ENCODE measurements at regions of chr10 and their contacts with region 1.

Region 1: DNA sequence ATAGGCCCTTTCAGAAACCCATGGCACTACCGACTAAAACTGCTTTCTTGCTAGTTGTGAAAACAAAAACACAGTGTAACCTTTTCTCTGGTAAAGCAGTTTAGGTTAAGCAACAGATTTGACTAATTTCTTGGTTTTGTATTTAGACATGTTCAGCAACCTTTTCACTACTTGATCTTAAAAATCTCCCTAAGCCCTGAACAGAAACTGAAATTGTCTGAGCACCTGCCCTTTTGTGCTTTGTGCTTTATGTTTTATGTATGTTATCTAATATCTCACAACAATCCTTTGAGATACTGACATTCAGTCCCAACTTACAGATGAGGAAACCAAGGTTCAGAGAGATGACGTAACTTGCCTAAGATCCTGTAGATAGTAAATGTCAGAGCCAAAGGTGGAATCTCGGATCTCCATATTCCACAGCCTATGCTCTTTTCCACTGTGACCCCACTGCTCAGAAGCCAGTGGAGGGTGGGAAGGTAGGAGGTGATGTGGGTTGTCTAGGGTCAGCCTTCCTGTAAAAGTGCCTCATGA is 146.6 kb downstream of the LCOR start:
- DNase-seq: peak; percentile 56
- ATAC-seq: peak; percentile 88
- H3K4me3 ChIP-seq: peak overlapping the region; percentile 13; the same call in 1 of the 2 replicates
- H3K27ac ChIP-seq: peak overlapping the region; percentile 87
- H3K4me1 ChIP-seq: peaks cover 35% of the 10 kb centered on the region
- H3K27me3 ChIP-seq: no peaks in the 10 kb centered on the region
- CTCF ChIP-seq: no peak
- EP300 ChIP-seq: peak in 1 of 2 experiments; percentile 62; a peak in 2 of 4 replicates
- POLR2A ChIP-seq: no peak
- RAD21 ChIP-seq: no peak

Region 2: DNA sequence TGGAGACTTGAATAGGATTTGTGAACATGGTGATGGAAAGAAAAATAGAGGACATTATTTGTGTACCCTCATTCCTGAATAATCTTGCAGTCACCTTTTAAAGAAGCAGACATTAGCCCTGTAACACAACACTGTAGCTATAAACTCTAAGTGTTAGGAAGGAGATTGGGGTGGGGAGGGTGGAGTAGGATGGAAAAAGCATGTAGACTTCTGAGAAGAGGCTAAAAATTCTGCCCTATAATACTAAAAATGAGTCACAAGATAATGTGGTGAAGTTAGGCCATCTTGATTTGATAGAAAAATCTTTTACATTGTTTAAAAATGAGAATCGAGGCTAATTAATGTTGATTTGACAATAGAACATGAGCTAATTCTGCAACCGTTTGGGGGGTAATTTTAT is 17.8 kb before region 1 on chr10:
- CTCF ChIA-PET with region 1: interaction called, 5 read pairs
- POLR2A ChIA-PET with region 1: interaction called, 4 read pairs
- RAD21 ChIA-PET with region 1: interaction called, 3 read pairs
- SMC1A ChIA-PET with region 1: interaction called, 15 read pairs
- in situ Hi-C with region 1: no loop called
- intact Hi-C with region 1: no loop called
- DNase-seq: no peak
- ATAC-seq: no peak
- H3K4me3 ChIP-seq: no peak overlapping the region
- H3K27ac ChIP-seq: no peak overlapping the region
- H3K4me1 ChIP-seq: no peaks in the 10 kb centered on the region
- H3K27me3 ChIP-seq: no peaks in the 10 kb centered on the region
- CTCF ChIP-seq: no peak
- EP300 ChIP-seq: no peak
- POLR2A ChIP-seq: no peak
- RAD21 ChIP-seq: no peak

Region 3: DNA sequence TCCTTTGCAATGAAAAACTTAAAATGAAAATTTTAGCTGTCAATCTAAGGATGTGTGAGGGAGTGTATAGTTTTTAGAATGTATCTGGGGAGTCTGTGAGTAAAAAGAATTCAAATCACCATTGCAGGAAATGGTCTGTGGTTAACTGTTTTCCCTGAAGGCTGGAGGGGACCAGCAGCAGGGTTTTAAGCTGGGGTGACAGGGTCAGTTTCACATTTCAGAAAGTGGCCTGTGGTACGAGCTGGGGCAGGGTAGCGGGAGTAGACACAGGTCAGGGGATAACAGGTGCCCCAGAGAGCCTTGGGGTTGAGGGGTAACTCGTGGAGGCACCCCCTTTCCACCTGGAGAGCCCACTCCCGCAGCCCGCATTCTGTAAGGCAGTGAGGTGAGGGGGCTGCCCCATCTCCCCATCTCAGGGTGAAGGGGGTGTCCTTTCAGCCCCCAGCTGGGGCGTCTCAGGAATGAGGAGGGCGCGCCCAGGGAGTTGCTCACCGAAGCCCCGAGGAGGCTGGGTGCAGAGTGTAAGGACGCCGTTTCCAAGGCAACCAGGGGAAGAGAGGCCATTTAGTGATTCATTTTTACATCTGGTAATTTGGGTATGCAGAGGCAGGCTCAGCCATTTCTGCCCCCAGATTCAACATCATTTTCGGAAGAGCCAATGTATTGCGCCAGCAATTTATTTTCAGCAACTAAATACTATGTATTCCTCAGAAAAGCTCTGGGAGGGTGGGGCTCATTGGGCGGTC is 38.2 kb after region 1 on chr10:
- CTCF ChIA-PET with region 1: interaction called, 4 read pairs
- POLR2A ChIA-PET with region 1: no interaction called
- RAD21 ChIA-PET with region 1: interaction called, 5 read pairs
- SMC1A ChIA-PET with region 1: interaction called, 96 read pairs
- in situ Hi-C with region 1: no loop called
- intact Hi-C with region 1: loop called (anchors 2 kb)
- DNase-seq: peak; percentile 65
- ATAC-seq: peak; percentile 92
- H3K4me3 ChIP-seq: peak overlapping the region; percentile 41; the same call in 1 of the 2 replicates
- H3K27ac ChIP-seq: peak overlapping the region; percentile 67
- H3K4me1 ChIP-seq: peaks cover 25% of the 10 kb centered on the region
- H3K27me3 ChIP-seq: no peaks in the 10 kb centered on the region
- CTCF ChIP-seq: no peak
- EP300 ChIP-seq: peak in 1 of 2 experiments; percentile 51; a peak in 1 of 4 replicates
- POLR2A ChIP-seq: no peak
- RAD21 ChIP-seq: no peak